ENCODE measurements at regions of chr1 and their contacts with region 1.

Region 1: GRCh38 chr1:183628537-183628936 is 7.0 kb downstream of the ARPC5 start:
- DNase-seq: no peak
- H3K4me3 ChIP-seq: no peak overlapping the region
- H3K27ac ChIP-seq: no peak overlapping the region
- H3K4me1 ChIP-seq: peaks cover 34 to 72% of the 10 kb centered on the region in 2 donors
- H3K27me3 ChIP-seq: no peaks in the 10 kb centered on the region
- CTCF ChIP-seq: no peak
- POLR2A ChIP-seq: no peak

Region 2: DNA sequence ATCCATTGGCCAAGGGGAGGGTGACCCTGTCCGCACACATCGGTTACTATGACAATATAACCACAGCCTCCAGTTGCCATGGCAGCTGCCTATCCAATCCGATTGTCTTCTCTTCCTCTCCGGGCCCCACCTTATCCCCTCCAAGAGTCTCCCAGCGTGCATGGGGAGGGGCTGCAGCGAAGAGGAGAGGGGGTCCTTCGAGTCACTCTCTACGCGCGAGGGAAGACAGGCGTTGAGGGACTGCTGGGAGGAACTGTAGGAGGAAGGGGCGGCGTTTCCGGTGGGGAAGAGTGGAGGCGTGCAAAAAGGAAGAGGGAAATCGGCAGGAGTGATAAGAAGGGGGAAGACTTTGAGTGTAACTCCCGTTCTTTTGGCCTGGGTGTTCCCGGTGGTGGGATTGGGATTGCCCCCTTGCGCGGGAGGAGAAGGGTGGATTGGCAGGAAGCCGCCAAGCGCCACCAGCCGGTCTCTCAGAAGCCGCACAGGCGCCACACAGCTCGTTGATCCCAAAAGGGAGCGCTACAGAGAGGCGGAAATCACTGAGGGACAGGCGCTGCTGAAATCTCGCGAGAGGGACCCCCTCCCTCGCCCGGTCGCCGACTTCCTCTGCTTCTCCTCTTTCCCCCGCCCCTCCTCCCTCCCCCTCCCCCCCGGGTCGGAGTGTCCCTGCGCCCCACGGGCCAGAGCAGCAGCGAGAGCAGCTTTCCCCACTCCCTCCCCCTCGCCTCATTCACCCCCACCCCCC is 156.6 kb before region 1 on chr1:
- intact Hi-C with region 1: loop called in 1 of 2 experiments (anchors 5 kb)
- DNase-seq: peak; percentile 97 to 100 (median 99)
- H3K4me3 ChIP-seq: peak overlapping the region; percentile 87 to 94 (median 90)
- H3K27ac ChIP-seq: peak overlapping the region; percentile 85 to 99 (median 97)
- H3K4me1 ChIP-seq: peaks cover 7 to 27% of the 10 kb centered on the region in 2 donors
- H3K27me3 ChIP-seq: no peaks in the 10 kb centered on the region
- CTCF ChIP-seq: peak in 1 of 6 experiments; percentile 18
- POLR2A ChIP-seq: peak in 1 of 2 donors; percentile 27